Endothelial cell of umbilical vein (primary cell): ENCODE measurements at regions of chr12 and their contacts with region 1.

Region 1: DNA sequence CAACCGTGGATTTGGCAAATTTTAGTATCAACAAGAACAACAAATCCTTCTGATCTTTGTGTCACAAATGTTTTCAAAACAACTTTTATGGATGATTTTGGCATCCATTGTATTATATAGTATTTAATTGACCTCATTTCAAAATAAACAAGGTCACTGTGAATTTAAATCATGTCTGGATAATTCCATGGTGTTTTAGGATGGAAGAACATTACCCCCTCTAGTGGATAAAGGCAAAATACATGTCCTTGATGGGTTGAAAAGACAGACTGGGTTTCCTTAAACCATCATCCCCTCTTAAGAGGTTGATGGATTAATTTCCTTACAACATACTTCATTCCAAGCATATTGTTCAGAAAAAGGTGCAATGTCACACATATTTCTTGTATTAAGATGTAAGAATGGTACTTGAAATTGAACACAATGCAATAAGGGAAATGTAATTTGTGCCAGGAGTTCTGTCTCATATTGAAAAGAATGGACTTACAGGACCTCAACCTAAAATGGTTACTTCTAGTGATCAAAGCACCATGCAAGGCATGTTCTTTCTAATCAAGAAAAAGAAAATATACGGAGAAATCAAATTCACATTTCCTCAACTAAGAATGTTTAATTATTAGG is 352.0 kb downstream of the BCAT1 start:
- DNase-seq: peak; percentile 60
- H3K4me3 ChIP-seq: no peak overlapping the region
- H3K27ac ChIP-seq: no peak overlapping the region
- H3K4me1 ChIP-seq: peaks cover 13% of the 10 kb centered on the region
- H3K27me3 ChIP-seq: peaks cover 0 to 7% of the 10 kb centered on the region in 2 experiments
- CTCF ChIP-seq: peak; percentile 41 to 58
- POLR2A ChIP-seq: no peak

Region 2: DNA sequence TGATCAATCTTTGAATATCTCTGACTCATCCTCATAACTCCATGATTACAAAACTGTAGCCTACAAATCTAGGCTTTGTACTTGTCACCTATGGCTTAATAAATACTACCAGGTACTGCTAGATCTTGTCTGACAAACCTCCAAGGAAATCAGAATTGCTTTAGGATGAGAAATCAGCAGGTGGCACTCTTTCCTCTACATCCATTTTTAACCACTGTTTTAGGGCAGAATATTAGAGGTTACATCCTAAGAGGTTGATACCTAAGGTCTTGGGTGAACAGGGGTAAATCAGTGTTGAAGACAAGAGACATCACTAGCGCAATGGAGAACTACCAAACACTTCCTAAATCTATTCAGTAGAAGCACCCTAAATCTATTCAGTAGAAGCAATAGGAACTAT is 584.4 kb before region 1 on chr12:
- CTCF ChIA-PET with region 1: interaction called, 3 read pairs
- POLR2A ChIA-PET with region 1: no interaction called
- dilution Hi-C with region 1: no loop called
- intact Hi-C with region 1: loop called (anchors 2 kb)
- DNase-seq: peak; percentile 35
- H3K4me3 ChIP-seq: no peak overlapping the region
- H3K27ac ChIP-seq: no peak overlapping the region
- H3K4me1 ChIP-seq: no peaks in the 10 kb centered on the region
- H3K27me3 ChIP-seq: peaks cover 5 to 9% of the 10 kb centered on the region in 2 experiments
- CTCF ChIP-seq: no peak
- POLR2A ChIP-seq: no peak

Region 3: GRCh38 chr12:24349051-24349799 is 247.7 kb before region 1 on chr12:
- CTCF ChIA-PET with region 1: no interaction called
- POLR2A ChIA-PET with region 1: no interaction called
- dilution Hi-C with region 1: no loop called
- intact Hi-C with region 1: loop called (anchors 1 kb)
- DNase-seq: peak; percentile 73
- H3K4me3 ChIP-seq: no peak overlapping the region
- H3K27ac ChIP-seq: peak overlapping the region; percentile 84
- H3K4me1 ChIP-seq: peaks cover 12% of the 10 kb centered on the region
- H3K27me3 ChIP-seq: no peaks in the 10 kb centered on the region
- CTCF ChIP-seq: no peak
- POLR2A ChIP-seq: no peak

Region 4: DNA sequence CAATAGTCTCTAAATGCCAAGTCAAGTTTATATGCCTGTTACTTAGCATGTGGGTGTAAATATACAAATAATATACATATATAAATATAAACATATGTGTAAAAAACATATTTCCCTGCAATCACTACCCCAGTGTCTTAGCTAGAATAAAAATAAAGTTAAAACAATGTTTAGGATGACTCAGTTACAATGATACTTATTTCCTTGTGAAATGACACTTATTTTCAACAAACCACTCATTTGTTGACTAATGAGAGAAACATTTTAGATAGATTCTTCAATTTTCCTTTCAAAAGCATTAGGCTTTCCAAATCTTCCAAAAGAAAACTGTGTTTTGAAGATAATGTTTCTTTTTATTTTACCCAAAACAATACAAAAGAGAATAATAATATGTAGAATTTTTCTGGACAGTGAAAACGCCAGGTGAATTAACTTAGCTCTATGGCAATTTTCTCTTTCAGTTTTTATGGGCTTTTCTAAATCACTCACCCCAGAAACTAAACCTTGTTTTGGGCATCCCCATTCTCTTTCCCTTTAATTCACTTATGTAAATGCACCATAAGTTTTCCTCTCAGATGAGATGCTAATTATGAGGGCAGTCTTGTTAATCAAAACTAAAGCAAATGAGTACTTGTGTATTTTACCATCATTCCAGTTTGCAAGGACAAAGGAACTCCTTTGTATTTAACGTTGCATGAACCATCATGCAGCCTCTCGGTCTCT is 113.8 kb before region 1 on chr12:
- CTCF ChIA-PET with region 1: no interaction called
- POLR2A ChIA-PET with region 1: no interaction called
- dilution Hi-C with region 1: no loop called
- intact Hi-C with region 1: no loop called
- DNase-seq: no peak
- H3K4me3 ChIP-seq: no peak overlapping the region
- H3K27ac ChIP-seq: no peak overlapping the region
- H3K4me1 ChIP-seq: no peaks in the 10 kb centered on the region
- H3K27me3 ChIP-seq: no peaks in the 10 kb centered on the region
- CTCF ChIP-seq: no peak
- POLR2A ChIP-seq: no peak

Region 5: GRCh38 chr12:24608637-24609285 is 11.9 kb after region 1 on chr12:
- CTCF ChIA-PET with region 1: interaction called, 6 read pairs
- POLR2A ChIA-PET with region 1: no interaction called
- dilution Hi-C with region 1: no loop called
- intact Hi-C with region 1: loop called (anchors 1 kb)
- DNase-seq: peak; percentile 91
- H3K4me3 ChIP-seq: no peak overlapping the region
- H3K27ac ChIP-seq: peak overlapping the region; percentile 44
- H3K4me1 ChIP-seq: peaks cover 16% of the 10 kb centered on the region
- H3K27me3 ChIP-seq: no peaks in the 10 kb centered on the region
- CTCF ChIP-seq: no peak
- POLR2A ChIP-seq: no peak

Region 6: DNA sequence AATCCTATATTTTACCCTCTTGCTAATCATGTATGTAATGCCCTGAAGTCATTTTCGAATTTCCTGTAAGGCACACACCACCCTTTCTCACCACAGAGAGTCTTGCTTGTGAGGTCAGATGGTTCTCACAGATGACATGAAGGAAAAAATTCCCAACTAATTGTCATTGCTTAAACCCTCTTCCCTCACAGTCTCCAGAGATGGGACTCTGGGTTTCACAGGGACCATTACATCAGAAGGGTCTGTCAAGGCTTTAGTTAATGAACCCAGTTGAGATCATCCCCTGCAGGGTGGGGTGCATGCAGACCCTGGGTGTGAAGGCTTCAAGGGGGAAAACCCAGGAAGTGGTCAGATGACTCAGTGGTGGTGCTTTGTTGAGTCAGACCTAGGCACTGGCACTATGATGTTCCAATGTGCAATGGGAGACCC is 122.4 kb after region 1 on chr12:
- CTCF ChIA-PET with region 1: no interaction called
- POLR2A ChIA-PET with region 1: no interaction called
- dilution Hi-C with region 1: no loop called
- intact Hi-C with region 1: no loop called
- DNase-seq: peak; percentile 7
- H3K4me3 ChIP-seq: no peak overlapping the region
- H3K27ac ChIP-seq: no peak overlapping the region
- H3K4me1 ChIP-seq: no peaks in the 10 kb centered on the region
- H3K27me3 ChIP-seq: peaks cover 0 to 2% of the 10 kb centered on the region in 2 experiments
- CTCF ChIP-seq: no peak
- POLR2A ChIP-seq: no peak